ENCODE measurements at regions of chr20 and their contacts with region 1.

Region 1: DNA sequence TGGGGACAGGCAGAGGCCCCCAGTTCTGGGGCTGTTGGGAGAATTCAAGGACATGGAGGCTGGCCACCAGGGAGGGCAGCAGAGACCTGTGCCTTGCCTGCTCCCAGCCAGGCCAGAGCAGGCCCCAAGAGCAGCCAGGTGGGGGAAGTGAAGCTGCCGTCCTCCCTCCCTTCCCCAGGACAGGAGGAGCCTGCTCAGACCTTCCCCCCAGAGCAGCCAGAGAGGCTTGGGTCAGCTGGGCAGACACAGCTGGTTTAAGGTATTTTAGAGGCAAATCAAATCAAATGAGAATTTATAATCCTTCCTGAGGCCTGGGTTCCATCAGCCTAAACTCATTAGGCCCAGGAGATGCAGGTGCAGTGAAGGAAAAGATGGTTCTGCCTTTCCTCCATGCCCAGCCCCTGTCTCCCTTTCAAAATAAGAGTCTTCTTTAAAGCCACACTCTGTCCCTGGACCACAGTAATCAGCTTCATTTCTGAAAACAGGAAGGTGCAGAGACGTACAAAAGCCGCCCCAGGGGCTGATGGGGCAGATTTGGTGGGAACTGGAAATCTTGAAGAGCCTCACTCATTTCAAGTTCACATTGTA is 21.7 kb downstream of the BMP7 start:
- DNase-seq: peak; percentile 73
- H3K4me3 ChIP-seq: no peak overlapping the region
- H3K27ac ChIP-seq: peak overlapping the region in 1 of 2 experiments; percentile 78; a peak in 2 of 4 replicates
- H3K4me1 ChIP-seq: peaks cover 0 to 38% of the 10 kb centered on the region in 2 experiments; a peak in 1 of 4 replicates
- H3K27me3 ChIP-seq: no peaks in the 10 kb centered on the region
- CTCF ChIP-seq: no peak
- EP300 ChIP-seq: peak in 1 of 2 experiments; percentile 98; a peak in 2 of 4 replicates
- RAD21 ChIP-seq: peak; percentile 60

Region 2: GRCh38 chr20:57223648-57224489 is 20.9 kb before region 1 on chr20:
- CTCF ChIA-PET with region 1: interaction called, 38 read pairs
- POLR2A ChIA-PET with region 1: interaction called, 5 read pairs
- DNase-seq: no peak
- H3K4me3 ChIP-seq: no peak overlapping the region
- H3K27ac ChIP-seq: peak overlapping the region in 1 of 2 experiments; percentile 43; a peak in 1 of 4 replicates
- H3K4me1 ChIP-seq: peaks cover 0 to 46% of the 10 kb centered on the region in 2 experiments; a peak in 1 of 4 replicates
- H3K27me3 ChIP-seq: no peaks in the 10 kb centered on the region
- CTCF ChIP-seq: no peak
- EP300 ChIP-seq: no peak
- RAD21 ChIP-seq: peak; percentile 26; the same call in 1 of the 2 replicates

Region 3: GRCh38 chr20:57329608-57330221 is 85.0 kb after region 1 on chr20 and contains the start of gene SPO11:
- CTCF ChIA-PET with region 1: interaction called, 32 read pairs
- POLR2A ChIA-PET with region 1: no interaction called
- DNase-seq: peak; percentile 37
- H3K4me3 ChIP-seq: no peak within 1 kb of the TSS; a peak in 1 of 4 replicates
- H3K27ac ChIP-seq: no peak within 1 kb of the TSS
- H3K4me1 ChIP-seq: peaks cover 0 to 6% of the 10 kb centered on the region in 2 experiments; a peak in 1 of 4 replicates
- H3K27me3 ChIP-seq: no peaks in the 10 kb centered on the region
- CTCF ChIP-seq: no peak
- EP300 ChIP-seq: no peak
- RAD21 ChIP-seq: peak; percentile 27; the same call in 1 of the 2 replicates
- polyA plus RNA-seq, gene SPO11: not detected in 2 replicates

Measured in SK-N-SH (cell line).